HEK293 (cell line): ENCODE measurements at regions of chr14 and their contacts with region 1.

Region 1: DNA sequence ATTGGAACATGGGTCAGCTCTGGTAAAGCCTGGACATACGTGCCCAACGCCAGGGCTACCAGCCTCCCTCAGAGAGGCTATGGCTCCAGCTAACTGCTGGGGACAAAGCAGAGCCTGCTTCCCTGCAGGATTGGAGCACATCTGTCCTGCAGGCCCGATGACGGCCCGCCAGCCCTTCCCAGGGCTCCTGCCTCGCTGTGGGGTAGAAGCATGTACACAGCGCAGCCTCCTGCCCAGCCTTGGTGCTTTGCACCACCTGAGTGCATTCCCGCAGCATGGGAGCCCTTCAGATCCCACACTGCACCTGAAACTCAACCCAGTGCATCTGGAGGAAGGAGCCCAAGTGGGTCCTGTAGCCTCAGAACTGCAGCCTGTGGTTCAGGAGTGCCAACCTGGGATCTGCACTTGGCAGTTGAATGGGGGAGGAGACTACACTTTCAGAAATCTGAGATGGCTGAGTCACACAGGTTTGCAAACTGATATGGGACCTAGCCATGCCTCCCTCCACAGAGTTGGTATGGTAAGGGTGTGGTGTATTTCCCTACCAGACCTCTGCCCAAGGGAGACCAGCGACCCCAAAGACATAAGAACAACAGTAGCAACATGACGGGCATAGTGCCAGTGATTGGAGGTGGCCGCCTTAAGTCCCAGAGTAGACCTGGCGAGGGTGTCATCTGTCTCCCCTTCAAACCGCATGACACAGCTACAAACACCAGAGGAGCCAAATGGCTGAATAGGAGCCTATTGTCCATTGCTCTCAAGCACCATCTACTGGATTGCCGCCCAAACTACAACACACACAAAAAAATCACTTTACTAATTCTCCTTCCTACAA is 273.9 kb upstream of the MIS18BP1 start:
- H3K4me3 ChIP-seq: no peak overlapping the region
- H3K27ac ChIP-seq: no peak overlapping the region
- H3K4me1 ChIP-seq: no peaks in the 10 kb centered on the region
- CTCF ChIP-seq: no peak

Region 2: DNA sequence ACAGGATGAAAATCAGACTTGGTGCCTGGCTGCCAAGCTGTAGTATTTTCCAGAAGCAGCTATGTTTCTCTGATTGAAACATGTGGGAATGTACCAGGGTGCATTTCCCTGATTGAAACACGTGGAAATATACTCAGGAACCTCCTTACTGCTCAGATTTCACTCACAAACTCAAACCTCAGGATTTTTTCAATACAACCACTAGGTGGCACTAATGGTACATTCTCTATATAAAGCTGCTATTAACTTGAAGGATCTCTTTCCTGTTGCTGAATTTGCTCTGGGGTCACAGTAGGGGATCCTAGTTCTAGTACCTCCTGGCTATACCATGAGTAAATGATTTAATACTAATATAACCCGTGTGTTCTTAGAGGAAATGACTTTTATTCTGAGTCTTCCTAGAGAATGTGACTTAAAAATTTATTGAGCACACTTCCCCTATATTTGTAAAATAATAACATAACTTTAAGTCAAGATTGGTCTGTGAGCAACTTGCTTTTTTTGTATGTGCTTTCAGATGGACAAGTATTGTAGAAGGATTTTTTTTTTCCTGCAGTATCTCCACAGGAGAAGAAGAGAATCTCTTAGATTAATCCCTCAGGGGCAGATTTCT is 100.2 kb before region 1 on chr14:
- CTCF ChIA-PET with region 1: interaction called, 20 read pairs
- POLR2A ChIA-PET with region 1: no interaction called
- H3K4me3 ChIP-seq: no peak overlapping the region
- H3K27ac ChIP-seq: no peak overlapping the region
- H3K4me1 ChIP-seq: no peaks in the 10 kb centered on the region
- CTCF ChIP-seq: no peak

Region 3: GRCh38 chr14:45492876-45493275 is 34.1 kb before region 1 on chr14:
- CTCF ChIA-PET with region 1: no interaction called
- POLR2A ChIA-PET with region 1: no interaction called
- H3K4me3 ChIP-seq: no peak overlapping the region
- H3K27ac ChIP-seq: no peak overlapping the region
- H3K4me1 ChIP-seq: no peaks in the 10 kb centered on the region
- CTCF ChIP-seq: no peak

Region 4: GRCh38 chr14:45559618-45560017 is 32.7 kb after region 1 on chr14:
- CTCF ChIA-PET with region 1: no interaction called
- POLR2A ChIA-PET with region 1: no interaction called
- H3K4me3 ChIP-seq: no peak overlapping the region
- H3K27ac ChIP-seq: no peak overlapping the region
- H3K4me1 ChIP-seq: no peaks in the 10 kb centered on the region
- CTCF ChIP-seq: no peak